PC-3 (cell line): ENCODE measurements at regions of chr5 and their contacts with region 1.

Region 1: GRCh38 chr5:168592014-168592418 is 12.8 kb upstream of the PANK3 start:
- DNase-seq: peak; percentile 72
- ATAC-seq: peak; percentile 7; the same call in 1 of the 2 replicates
- H3K4me3 ChIP-seq: no peak overlapping the region
- H3K27ac ChIP-seq: 0 out of 2 replicates have a peak overlapping the region, but pooled peaks have one; percentile 13
- H3K4me1 ChIP-seq: peaks cover 25% of the 10 kb centered on the region
- H3K27me3 ChIP-seq: no peaks in the 10 kb centered on the region
- CTCF ChIP-seq: no peak

Region 2: GRCh38 chr5:168372356-168372946 is 219.6 kb before region 1 on chr5:
- CTCF ChIA-PET with region 1: no interaction called
- POLR2A ChIA-PET with region 1: no interaction called
- intact Hi-C with region 1: no loop called
- DNase-seq: no peak
- ATAC-seq: no peak
- H3K4me3 ChIP-seq: no peak overlapping the region
- H3K27ac ChIP-seq: no peak overlapping the region
- H3K4me1 ChIP-seq: peaks cover 5% of the 10 kb centered on the region; the same call in 1 of the 2 replicates
- H3K27me3 ChIP-seq: no peaks in the 10 kb centered on the region
- CTCF ChIP-seq: no peak

Region 3: GRCh38 chr5:168528521-168529372 is 63.3 kb before region 1 on chr5 and contains the start of gene FBLL1:
- CTCF ChIA-PET with region 1: no interaction called
- POLR2A ChIA-PET with region 1: no interaction called
- intact Hi-C with region 1: no loop called
- DNase-seq: no peak
- ATAC-seq: no peak
- H3K4me3 ChIP-seq: no peak within 1 kb of the TSS
- H3K27ac ChIP-seq: no peak within 1 kb of the TSS
- H3K4me1 ChIP-seq: no peaks in the 10 kb centered on the region
- H3K27me3 ChIP-seq: no peaks in the 10 kb centered on the region
- CTCF ChIP-seq: no peak
- total RNA-seq, gene FBLL1: 0.07 TPM in 1 of 2 replicates, not detected in the other

Region 4: DNA sequence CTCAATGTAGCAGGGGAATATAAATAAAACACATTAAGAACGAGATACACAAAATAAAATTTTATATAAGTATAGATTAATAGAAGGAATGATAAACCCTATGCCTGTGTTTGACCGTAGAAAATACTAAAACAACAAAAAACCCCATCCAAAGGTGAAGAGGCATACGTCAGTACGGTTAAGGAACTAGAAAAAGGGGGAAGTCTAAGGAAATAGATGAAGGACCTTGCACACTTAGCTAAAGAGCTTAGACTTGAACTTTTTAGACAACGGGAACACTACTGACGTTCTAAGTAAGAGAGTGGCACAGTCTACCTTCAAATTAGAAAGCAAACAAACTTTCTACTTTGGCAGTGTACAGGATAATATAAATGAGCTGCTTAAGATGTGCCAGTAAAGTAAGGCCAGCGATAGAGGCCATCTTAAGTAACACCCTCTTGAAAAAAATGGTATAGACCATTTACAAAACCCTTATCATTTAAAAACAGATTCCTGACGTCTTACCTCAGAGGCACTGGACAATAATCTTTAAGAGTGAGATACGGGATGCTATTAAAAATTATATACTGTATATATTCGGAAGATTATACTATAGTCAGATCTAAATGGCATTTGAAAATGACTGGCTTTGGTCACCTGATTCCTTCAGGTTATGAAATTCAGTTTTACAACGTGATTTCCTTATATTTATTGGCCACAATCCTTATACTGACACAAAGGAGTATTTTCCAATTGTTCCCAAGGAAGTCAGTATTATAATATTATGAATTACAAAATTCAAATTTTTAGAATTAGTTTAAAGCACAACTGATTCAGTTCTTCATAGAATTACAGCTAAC is 21.3 kb before region 1 on chr5:
- CTCF ChIA-PET with region 1: no interaction called
- POLR2A ChIA-PET with region 1: interaction called, 18 read pairs
- intact Hi-C with region 1: no loop called
- DNase-seq: no peak
- ATAC-seq: no peak
- H3K4me3 ChIP-seq: no peak overlapping the region
- H3K27ac ChIP-seq: no peak overlapping the region
- H3K4me1 ChIP-seq: no peaks in the 10 kb centered on the region
- H3K27me3 ChIP-seq: no peaks in the 10 kb centered on the region
- CTCF ChIP-seq: no peak